Heart left ventricle (tissue), 16 donors: ENCODE measurements at regions of chr1 and their contacts with region 1.

Region 1: GRCh38 chr1:246629030-246629429 is 62.8 kb downstream of the CNST start:
- DNase-seq: no peak
- ATAC-seq: no peak
- H3K4me3 ChIP-seq: no peak overlapping the region
- H3K27ac ChIP-seq: no peak overlapping the region
- H3K4me1 ChIP-seq: peaks cover 0 to 6% (median 0%) of the 10 kb centered on the region in 12 donors
- H3K27me3 ChIP-seq: no peaks in the 10 kb centered on the region
- CTCF ChIP-seq: no peak
- POLR2A ChIP-seq: no peak

Region 2: GRCh38 chr1:246506674-246507481 is 122.2 kb before region 1 on chr1 and contains the start of gene SMYD3:
- intact Hi-C with region 1: loop called in 1 of 10 experiments (anchors 10 kb)
- DNase-seq: peak; percentile 72 to 89 (median 83)
- ATAC-seq: peak; percentile 95 to 100 (median 98)
- H3K4me3 ChIP-seq: peak within 1 kb of the TSS; percentile 66 to 90 (median 77)
- H3K27ac ChIP-seq: peak within 1 kb of the TSS in 9 of 12 donors; percentile 27 to 73 (median 57)
- H3K4me1 ChIP-seq: peaks cover 0 to 16% (median 7%) of the 10 kb centered on the region in 12 donors
- H3K27me3 ChIP-seq: no peaks in the 10 kb centered on the region
- CTCF ChIP-seq: peak in 4 of 12 donors; percentile 19 to 44 (median 40)
- POLR2A ChIP-seq: peak in 1 of 2 donors; percentile 78
- total RNA-seq, gene SMYD3: 6.6 to 12.1 (median 9.5) TPM

Region 3: DNA sequence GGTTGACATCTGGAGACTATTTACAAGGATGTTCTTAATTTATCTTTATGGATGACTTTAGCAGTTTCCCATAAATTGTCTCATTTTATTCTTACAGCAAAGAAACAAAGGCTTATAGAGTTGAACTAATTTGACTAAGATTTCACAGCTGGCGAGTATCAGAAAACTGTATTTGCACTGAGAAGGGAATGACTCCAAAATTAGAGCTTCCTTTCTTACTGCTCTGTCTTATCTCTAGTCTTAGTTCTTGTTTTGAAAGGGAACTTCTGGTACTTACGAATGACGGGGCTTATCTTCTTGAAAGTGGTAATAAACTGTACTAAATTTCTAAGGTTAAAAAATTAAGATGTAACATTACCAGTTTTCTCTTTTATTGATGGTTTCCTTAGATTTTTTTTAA is 49.2 kb before region 1 on chr1:
- intact Hi-C with region 1: loop called in 1 of 10 experiments (anchors 10 kb)
- DNase-seq: no peak
- ATAC-seq: peak in 3 of 4 donors; percentile 38 to 44 (median 40)
- H3K4me3 ChIP-seq: no peak overlapping the region
- H3K27ac ChIP-seq: peak overlapping the region in 10 of 12 donors; percentile 6 to 59 (median 47)
- H3K4me1 ChIP-seq: peaks cover 4 to 83% (median 52%) of the 10 kb centered on the region in 12 donors
- H3K27me3 ChIP-seq: no peaks in the 10 kb centered on the region
- CTCF ChIP-seq: no peak
- POLR2A ChIP-seq: no peak

Region 4: DNA sequence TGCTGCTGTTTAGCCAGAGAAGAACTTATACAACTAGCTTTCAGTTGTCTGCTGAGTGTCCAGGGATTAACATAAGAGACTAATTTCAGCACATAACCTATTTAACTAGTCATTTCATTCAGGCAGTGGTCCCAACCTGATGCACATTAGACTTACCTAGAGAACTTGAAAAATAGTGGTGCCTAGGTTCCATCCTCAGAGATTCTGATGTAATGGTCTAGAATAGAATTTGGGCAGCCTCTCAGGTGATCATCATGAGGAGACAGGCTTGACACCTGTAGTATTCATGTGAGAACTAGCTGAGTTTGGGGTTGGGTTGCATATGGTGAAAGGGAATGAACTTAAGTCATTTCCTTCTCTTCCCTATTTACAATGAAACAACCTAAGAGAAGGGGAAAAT is 38.0 kb before region 1 on chr1:
- intact Hi-C with region 1: no loop called
- DNase-seq: no peak
- ATAC-seq: no peak
- H3K4me3 ChIP-seq: no peak overlapping the region
- H3K27ac ChIP-seq: no peak overlapping the region
- H3K4me1 ChIP-seq: peaks cover 0 to 46% (median 13%) of the 10 kb centered on the region in 12 donors
- H3K27me3 ChIP-seq: no peaks in the 10 kb centered on the region
- CTCF ChIP-seq: no peak
- POLR2A ChIP-seq: no peak

Region 5: DNA sequence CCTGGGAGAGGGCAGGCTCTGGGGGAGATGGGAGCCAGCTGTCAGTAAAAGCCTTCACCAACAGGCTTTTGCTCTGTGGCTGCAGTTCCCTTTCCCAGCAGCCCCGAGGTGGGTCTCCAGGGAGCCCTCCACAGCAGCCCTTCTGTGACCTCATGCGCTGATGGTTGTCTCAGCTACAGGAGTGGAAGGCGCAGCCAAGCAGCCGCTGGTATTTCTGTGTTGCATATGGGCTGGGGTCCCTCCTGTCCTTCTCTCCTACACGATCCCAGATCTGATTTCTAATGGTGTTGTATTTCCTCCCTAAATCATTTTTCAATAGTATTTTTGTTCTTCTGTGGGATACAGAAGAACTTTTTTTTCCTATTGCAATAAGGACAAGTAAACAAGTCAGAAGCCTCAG is 52.9 kb after region 1 on chr1:
- intact Hi-C with region 1: no loop called
- DNase-seq: peak; percentile 70 to 85 (median 74)
- ATAC-seq: peak; percentile 43 to 80 (median 72)
- H3K4me3 ChIP-seq: no peak overlapping the region
- H3K27ac ChIP-seq: peak overlapping the region; percentile 25 to 86 (median 67)
- H3K4me1 ChIP-seq: peaks cover 0 to 41% (median 16%) of the 10 kb centered on the region in 12 donors
- H3K27me3 ChIP-seq: no peaks in the 10 kb centered on the region
- CTCF ChIP-seq: no peak
- POLR2A ChIP-seq: no peak